GM13977 (cell line): ENCODE measurements at regions of chr5 and their contacts with region 1.

Region 1: DNA sequence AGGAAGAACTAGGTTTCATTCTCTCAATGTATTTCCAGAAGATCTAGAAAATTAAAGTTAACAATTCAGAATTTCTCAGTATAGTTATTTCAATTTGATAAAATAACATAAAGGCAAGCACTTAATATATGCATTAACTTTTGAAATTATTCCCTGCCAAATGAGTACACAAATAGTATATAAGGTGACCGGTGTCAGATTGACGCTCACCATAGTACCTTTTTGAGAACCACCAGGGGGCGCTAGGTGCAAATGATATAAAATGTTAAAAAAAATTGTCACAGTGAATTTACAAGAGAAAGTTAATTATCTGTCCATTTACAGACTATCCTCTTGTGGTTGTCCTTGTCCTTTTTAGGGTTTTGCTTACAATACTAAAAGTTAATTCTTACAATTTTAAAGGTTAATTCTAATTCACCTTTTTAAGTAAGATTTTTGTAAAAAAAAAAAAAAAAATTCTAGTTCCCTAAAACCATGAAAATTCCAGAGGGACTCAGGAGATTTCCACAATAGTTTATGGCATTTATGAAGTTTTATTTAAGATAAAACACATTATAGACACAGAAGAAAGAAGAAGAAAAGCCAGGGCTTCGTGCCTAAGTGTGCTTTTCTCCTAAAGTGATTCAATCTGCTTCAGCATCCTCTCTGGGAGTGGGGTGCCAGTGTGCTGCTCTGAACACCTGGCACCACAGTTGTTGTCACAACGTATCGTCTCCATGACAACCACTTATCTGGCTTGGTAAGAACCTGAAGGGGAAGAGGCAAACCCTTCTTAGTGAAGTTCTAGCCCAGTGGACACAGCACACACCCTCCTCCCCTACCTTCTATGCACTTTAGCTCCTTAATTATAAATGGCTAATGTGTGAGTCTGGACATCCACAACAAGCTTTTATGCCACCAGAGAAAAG is 1.7 kb downstream of the ADAMTS16 start:
- DNase-seq: peak; percentile 58
- CTCF ChIP-seq: peak; percentile 58

Region 2: DNA sequence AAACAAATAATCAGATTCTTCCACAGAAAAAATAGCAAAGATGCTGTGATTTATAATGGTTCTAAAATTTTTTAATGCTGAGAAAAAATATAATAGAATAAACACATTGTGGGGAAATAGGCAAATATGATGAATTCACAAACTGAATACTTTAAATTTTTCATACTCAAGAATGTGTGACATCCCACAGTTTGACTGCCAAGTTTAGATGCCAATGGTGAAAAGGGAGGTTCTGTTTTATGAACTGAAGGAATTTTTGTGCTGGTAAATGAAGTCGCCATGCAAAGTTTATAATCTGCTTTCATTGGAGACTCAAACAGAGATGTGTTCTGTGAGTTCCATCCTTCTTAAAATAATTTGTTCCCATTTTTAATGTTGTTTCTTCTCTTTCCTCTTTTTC is 369.3 kb before region 1 on chr5:
- in situ Hi-C with region 1: no loop called
- DNase-seq: no peak
- CTCF ChIP-seq: no peak

Region 3: DNA sequence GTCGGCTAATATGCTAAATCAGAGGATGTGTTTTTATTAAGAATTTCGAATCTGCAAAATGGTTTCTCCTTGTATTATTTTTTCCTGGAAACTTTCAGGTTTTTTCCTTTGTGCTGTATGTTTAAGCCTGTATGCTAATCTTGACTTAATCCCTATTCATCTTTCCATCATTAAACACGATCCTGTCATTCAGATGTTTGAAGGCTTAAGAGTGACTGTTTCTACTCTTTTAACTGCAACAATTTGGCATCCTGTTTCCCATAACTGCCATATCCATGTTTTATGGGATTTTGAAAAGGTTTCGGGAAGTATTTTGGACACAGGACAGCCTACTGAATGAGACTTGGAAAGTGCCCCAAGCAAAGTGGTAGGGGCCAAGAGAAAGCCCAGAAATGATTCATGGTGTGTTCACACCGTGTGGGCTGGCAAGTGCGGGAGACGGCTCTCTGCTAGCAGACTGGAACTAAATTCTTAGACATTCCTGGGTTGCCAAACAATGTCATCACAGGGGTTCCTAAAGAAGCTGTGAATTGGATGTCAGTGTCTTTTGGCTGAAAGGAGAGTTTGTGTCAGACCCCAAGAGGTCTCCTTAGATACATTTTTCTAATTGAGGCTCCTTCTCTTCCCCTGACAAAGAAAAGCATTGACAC is 127.2 kb before region 1 on chr5:
- in situ Hi-C with region 1: no loop called
- DNase-seq: no peak
- CTCF ChIP-seq: no peak

Region 4: DNA sequence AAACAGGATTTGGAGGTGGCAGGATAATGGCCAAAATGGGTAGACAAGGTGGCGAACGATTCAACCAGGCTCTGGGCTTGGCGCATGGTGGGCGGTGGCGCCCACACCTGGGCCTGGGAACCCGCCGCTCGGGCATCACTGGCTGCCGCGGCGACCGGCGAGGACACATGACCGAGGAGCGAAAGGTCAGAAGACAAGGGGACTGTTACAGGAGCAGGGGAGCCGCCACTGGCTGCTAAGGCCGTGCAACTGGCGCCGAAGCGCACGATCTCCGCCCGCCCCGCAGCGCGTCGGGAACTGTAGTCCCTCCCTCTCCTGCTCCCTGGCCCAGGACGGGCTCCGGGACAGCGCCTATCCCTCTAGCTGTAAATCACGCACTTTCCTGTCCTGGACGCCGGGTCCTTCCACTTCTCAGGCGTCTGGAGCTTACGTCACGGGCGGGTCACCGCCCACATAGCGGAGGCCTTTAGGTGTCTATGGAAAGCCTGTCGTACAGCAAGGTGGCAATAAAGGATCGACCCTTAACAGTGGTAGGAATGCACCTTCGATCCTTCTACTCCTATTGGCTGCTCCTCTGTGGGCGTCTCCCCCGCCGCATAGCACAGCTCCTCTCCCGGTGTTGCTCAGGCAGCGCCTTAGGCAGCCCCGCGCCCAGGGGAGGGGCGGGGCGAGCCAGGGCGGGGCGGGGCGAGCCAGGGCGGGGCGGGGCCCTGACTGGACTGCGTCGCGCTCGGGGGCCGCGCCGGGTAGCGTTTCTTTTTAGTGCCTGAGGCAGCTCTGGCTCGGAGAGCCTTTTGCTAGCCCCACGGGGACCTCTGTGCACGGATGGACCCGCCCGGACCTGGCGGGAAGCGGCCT is 280.3 kb after region 1 on chr5 and contains the start of gene ICE1:
- in situ Hi-C with region 1: loop called (anchors 25 kb)
- DNase-seq: peak; percentile 94
- CTCF ChIP-seq: no peak